ENCODE measurements at regions of chr7 and their contacts with region 1.

Region 1: DNA sequence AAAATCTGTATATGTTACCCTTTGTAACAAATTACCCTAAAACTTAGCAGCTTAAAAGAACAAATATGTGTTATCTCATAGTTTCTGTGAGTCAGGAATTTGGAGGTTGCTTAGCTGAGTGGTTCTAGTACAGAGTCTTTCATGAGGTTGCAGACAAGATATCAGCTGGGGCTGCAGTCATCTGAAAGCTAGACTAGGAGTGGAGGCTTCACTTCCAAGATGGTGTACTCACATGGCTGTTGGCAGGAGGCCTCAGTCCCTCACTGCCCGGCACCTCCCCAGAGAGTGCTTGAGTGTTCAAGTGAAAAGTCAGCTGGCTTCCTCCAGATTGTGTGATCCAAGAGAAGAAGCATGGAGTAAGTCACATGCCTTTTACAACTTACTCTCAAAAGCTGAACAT is 16.9 kb upstream of the GGCT start:
- DNase-seq: no peak
- ATAC-seq: no peak; the same call in 2 of the 3 replicates
- H3K4me3 ChIP-seq: no peak overlapping the region
- H3K27ac ChIP-seq: no peak overlapping the region
- H3K4me1 ChIP-seq: peaks cover 10% of the 10 kb centered on the region
- H3K27me3 ChIP-seq: no peaks in the 10 kb centered on the region
- CTCF ChIP-seq: no peak
- EP300 ChIP-seq: no peak
- POLR2A ChIP-seq: no peak
- RAD21 ChIP-seq: no peak

Region 2: GRCh38 chr7:30353932-30354607 is 167.5 kb before region 1 on chr7:
- CTCF ChIA-PET with region 1: no interaction called
- POLR2A ChIA-PET with region 1: no interaction called
- RAD21 ChIA-PET with region 1: no interaction called
- SMC1A ChIA-PET with region 1: no interaction called
- in situ Hi-C with region 1: no loop called
- intact Hi-C with region 1: no loop called
- DNase-seq: no peak
- ATAC-seq: no peak
- H3K4me3 ChIP-seq: no peak overlapping the region
- H3K27ac ChIP-seq: no peak overlapping the region
- H3K4me1 ChIP-seq: peaks cover 2% of the 10 kb centered on the region; the same call in 1 of the 2 replicates
- H3K27me3 ChIP-seq: no peaks in the 10 kb centered on the region
- CTCF ChIP-seq: no peak
- EP300 ChIP-seq: no peak
- POLR2A ChIP-seq: no peak
- RAD21 ChIP-seq: no peak

Region 3: DNA sequence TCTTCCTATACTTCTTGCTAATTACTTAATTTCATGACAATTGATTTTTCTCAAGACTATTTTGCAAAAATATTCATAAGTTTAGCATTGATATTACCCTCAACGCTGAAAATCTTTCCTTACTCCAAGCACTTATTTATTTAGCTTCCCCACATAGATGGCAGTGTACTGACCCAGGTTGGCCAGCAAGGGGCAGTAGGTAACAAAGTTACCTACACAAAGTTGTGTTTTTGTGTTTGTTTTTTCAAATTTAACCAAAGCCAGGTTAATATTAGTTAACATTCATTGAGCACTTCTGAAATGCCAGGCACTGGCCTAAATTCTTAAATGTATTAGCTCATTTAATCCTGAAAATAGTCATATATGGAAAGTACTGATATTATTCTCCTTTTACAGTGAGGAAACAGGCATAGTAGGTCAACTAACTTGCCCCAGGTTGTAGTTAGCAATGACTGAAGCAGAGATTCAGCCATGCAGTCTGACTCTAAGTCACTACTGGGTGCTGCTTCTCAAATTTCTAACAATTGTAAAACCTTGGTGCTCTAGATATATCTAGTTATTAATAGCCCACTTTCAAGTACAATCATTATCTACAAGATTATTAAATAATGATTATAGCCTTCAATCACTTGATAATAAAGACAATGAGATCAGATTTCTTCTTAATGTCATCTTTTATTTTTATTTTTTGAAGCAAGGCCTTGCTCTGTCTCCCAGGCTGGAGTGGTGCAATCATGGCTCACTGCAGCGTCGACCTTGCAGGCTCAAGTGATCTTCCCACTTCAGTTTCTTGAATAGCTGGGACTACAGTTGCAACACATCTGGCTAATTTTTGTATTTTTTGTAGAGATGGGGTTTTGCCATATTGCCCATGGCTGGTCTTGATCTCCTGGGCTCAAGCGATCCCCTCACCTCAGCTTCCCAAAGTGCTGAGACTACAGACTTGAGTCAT is 11.1 kb before region 1 on chr7:
- CTCF ChIA-PET with region 1: interaction called, 9 read pairs
- POLR2A ChIA-PET with region 1: interaction called, 4 read pairs
- RAD21 ChIA-PET with region 1: no interaction called
- SMC1A ChIA-PET with region 1: interaction called, 10 read pairs
- in situ Hi-C with region 1: no loop called
- intact Hi-C with region 1: no loop called
- DNase-seq: no peak
- ATAC-seq: peak; percentile 85
- H3K4me3 ChIP-seq: no peak overlapping the region
- H3K27ac ChIP-seq: no peak overlapping the region
- H3K4me1 ChIP-seq: no peaks in the 10 kb centered on the region
- H3K27me3 ChIP-seq: no peaks in the 10 kb centered on the region
- CTCF ChIP-seq: peak; percentile 67 to 85 (median 82)
- EP300 ChIP-seq: no peak
- POLR2A ChIP-seq: no peak
- RAD21 ChIP-seq: peak; percentile 75

Region 4: GRCh38 chr7:30575910-30576309 is 54.4 kb after region 1 on chr7:
- CTCF ChIA-PET with region 1: no interaction called
- POLR2A ChIA-PET with region 1: no interaction called
- RAD21 ChIA-PET with region 1: no interaction called
- SMC1A ChIA-PET with region 1: no interaction called
- in situ Hi-C with region 1: no loop called
- intact Hi-C with region 1: no loop called
- DNase-seq: no peak
- ATAC-seq: no peak
- H3K4me3 ChIP-seq: no peak overlapping the region
- H3K27ac ChIP-seq: no peak overlapping the region
- H3K4me1 ChIP-seq: no peaks in the 10 kb centered on the region
- H3K27me3 ChIP-seq: no peaks in the 10 kb centered on the region
- CTCF ChIP-seq: no peak
- EP300 ChIP-seq: no peak
- POLR2A ChIP-seq: no peak
- RAD21 ChIP-seq: no peak